Activated T-helper 2 cell treated with anti-CD3 and anti-CD28 coated beads, Interferon-gamma antibody, Interleukin-2, Interleukin-4, amounts not matched to agents 10 μg/mL and 5 μg/mL and 100 μg/mL, durations not matched to agents 14 hours and 24 hours and 36 hours (primary cell): ENCODE measurements at regions of chr2 and their contacts with region 1.

Region 1: DNA sequence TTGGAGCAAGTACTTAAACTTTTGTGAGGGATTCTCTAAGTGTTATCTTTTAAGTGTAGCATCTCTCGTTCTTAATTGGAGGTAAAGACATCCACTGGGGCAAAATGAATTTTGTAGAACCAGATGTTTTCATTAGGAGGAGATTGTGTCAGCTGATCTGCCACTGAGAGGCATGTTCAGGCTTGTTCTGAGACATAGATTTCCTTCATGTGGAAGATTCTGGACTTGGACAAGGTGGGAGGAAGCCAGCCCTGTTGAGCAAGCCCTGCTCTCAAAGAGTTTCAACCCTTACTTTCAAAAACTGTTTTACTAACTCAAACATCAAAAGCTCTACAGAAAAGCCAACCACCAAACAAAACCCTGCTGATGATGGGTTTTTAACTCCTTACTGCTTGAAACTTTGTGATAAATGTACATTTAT is 6.5 kb downstream of the MAP4K4 start:
- DNase-seq: no peak
- H3K4me3 Mint-ChIP-seq: peak overlapping the region; percentile 53
- H3K27ac Mint-ChIP-seq: peak overlapping the region; percentile 77
- H3K4me1 Mint-ChIP-seq: peaks cover 59% of the 10 kb centered on the region
- H3K27me3 Mint-ChIP-seq: no peaks in the 10 kb centered on the region

Region 2: GRCh38 chr2:101524806-101525430 is 179.1 kb before region 1 on chr2:
- intact Hi-C with region 1: no loop called
- DNase-seq: no peak
- H3K4me3 Mint-ChIP-seq: no peak overlapping the region
- H3K27ac Mint-ChIP-seq: no peak overlapping the region
- H3K4me1 Mint-ChIP-seq: peaks cover 5% of the 10 kb centered on the region
- H3K27me3 Mint-ChIP-seq: peaks cover 10% of the 10 kb centered on the region

Region 3: DNA sequence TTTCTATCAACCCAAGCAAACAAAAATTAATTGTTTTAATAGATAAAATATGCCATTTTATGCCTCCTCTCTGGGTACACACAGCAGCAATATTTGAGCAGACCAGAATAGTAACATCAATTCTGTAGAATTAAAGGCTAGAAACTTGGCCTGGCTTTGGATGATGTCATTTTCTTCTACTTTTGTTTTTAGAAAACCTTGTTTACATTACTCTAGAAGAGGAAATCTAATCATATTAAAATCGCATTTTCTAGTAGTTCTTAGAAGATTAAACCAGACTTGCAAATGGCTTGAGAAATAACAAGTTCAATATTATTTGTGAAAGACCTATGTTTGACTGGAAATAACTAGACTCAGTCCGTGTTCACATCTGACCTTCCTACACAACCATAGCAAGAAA is 126.9 kb before region 1 on chr2:
- intact Hi-C with region 1: loop called (anchors 10 kb)
- DNase-seq: no peak
- H3K4me3 Mint-ChIP-seq: no peak overlapping the region
- H3K27ac Mint-ChIP-seq: no peak overlapping the region
- H3K4me1 Mint-ChIP-seq: peaks cover 41% of the 10 kb centered on the region
- H3K27me3 Mint-ChIP-seq: no peaks in the 10 kb centered on the region

Region 4: GRCh38 chr2:101717071-101717845 is 13.2 kb after region 1 on chr2:
- intact Hi-C with region 1: loop called (anchors 1 kb)
- DNase-seq: no peak
- H3K4me3 Mint-ChIP-seq: peak overlapping the region; percentile 38
- H3K27ac Mint-ChIP-seq: peak overlapping the region; percentile 83
- H3K4me1 Mint-ChIP-seq: peaks cover 60% of the 10 kb centered on the region
- H3K27me3 Mint-ChIP-seq: no peaks in the 10 kb centered on the region

Region 5: GRCh38 chr2:101736861-101737291 is 32.8 kb after region 1 on chr2:
- intact Hi-C with region 1: loop called (anchors 1 kb)
- DNase-seq: no peak
- H3K4me3 Mint-ChIP-seq: no peak overlapping the region
- H3K27ac Mint-ChIP-seq: no peak overlapping the region
- H3K4me1 Mint-ChIP-seq: peaks cover 55% of the 10 kb centered on the region
- H3K27me3 Mint-ChIP-seq: no peaks in the 10 kb centered on the region

Region 6: DNA sequence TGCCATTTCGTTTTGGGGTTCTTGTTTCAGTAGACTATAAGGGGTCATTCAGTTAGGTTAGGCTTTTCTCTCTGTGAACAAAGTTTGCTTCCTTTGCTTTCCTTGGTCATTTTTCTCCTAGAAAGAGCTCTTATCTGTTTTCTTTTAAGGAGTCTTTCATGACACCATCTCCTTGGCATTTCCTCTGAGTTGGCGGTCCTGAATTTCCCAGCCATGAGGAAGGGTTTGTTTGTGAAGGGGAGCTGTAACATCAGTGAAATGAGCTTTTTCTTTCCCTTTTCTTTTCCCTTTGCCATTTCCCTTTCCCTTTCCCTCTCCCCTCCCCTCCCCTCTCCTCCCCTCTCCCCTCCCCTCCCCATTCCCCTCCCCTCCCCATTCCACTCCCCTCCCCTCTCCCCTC is 55.1 kb after region 1 on chr2:
- intact Hi-C with region 1: loop called (anchors 2 kb)
- DNase-seq: no peak
- H3K4me3 Mint-ChIP-seq: no peak overlapping the region
- H3K27ac Mint-ChIP-seq: no peak overlapping the region
- H3K4me1 Mint-ChIP-seq: peaks cover 39% of the 10 kb centered on the region
- H3K27me3 Mint-ChIP-seq: no peaks in the 10 kb centered on the region

Region 7: GRCh38 chr2:101823347-101823791 is 119.3 kb after region 1 on chr2:
- intact Hi-C with region 1: loop called (anchors 2 kb)
- DNase-seq: peak; percentile 51
- H3K4me3 Mint-ChIP-seq: peak overlapping the region; percentile 18
- H3K27ac Mint-ChIP-seq: peak overlapping the region; percentile 21
- H3K4me1 Mint-ChIP-seq: peaks cover 63% of the 10 kb centered on the region
- H3K27me3 Mint-ChIP-seq: no peaks in the 10 kb centered on the region